Cardiac septum (tissue), 1 donor: ENCODE measurements at regions of chr1 and their contacts with region 1.

Region 1: DNA sequence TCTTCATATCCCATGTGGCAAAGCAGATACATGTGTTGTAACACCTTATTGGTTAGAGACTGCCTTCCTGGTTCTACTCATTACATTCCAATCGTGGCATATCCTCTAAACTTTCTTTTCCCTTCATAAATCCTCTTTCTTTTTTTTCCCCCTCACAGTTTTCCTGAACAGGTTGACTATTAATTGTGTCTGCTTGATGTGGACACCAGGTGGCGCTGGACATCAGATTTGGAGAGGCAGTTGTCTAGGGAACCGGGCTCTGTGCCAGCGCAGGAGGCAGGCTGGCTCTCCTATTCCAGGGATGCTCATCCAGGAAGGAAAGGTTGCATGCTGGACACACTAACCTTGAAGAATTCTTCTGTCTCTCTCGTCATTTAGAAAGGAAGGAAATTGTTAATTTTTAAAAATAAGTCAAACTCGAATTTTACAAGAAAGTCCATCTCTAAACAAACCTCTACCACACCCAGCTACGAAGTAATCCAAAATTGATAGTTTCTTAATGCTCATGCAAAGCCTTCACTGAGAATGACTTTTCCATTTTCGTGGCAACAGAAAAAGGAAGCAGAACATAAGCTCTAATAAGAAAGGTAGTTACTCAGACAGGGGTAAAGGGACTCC is 59.4 kb upstream of the ASB17 start:
- DNase-seq: peak; percentile 90

Region 2: DNA sequence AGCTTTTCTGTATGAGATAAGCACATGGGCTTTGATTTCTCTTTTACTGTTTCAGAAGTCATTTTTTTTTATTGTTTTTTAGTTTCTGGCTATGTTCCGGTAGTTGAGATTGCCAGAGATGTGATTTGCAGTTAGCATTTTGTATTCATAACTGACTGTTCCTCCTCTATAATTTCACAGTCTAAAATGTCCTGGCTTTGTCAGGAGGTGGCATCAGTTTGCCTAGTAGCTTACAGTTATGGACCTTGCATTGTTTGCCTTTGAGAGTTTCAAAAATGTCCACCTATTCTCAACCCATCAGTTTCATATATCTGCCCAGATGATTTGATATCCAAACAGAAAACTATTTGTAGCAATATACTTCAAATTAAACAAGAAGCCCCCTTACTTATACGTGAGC is 43.4 kb after region 1 on chr1:
- intact Hi-C with region 1: no loop called
- DNase-seq: no peak

Region 3: DNA sequence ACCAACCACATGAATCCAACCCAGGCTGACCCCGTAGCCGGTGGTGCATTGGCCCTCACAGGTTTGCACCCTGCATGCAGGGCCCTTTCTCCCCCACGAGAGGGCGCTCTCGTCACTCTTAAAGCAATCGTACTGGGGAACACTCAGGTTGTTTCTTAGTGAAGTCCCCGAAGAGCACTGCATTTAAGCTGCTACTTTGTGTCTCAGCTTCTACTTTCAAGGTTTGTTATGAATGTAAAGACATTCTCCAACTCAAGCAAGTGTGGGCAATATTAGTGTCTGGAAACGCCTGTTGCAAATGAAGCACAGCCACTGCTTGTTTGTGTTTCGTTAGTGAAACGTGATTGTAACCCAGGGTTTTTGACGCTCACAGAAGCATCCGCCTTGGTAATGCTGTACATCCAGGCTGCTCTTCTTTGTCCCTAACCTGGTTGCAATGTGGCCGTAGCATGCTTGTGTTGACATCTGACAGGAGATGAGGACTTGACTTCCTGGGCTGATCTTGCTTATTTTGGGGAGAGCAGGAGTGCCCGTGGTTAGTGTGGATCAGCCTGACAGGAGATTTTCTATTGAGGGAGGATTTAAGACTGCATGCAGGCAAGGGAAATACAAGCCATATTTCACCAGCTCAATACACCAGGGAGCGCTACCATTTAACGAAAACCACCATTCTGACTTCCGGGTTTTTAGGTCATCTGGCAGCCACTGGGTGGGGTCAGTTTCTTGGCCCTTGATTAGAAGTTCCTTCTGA is 162.8 kb after region 1 on chr1:
- intact Hi-C with region 1: loop called (anchors 5 kb)
- DNase-seq: peak; percentile 86

Region 4: DNA sequence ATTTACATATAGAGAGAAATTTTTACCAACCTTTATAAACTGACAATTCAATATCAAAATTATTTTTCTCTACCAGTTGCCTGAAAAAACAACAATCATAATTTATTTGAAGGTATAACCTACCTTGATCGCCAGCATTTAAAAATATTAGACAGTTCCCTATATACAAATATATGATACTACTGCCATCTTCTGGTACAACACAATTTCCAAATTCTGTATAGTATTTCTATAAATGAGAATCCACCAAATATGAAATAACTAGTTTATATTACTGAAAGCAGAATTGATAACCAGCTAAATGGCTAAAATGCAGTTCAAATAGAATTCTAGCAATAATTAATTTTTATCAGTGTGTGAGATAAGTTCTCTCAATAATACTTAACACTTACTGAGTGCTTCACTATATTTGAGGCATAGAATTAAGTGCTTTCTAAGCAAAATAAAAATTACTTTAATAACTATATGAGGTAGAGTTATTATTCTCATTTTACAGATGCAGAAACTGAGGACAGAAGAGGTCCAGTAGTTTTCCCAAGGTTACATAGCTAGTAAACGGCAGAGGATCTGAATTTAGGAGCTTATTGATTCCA is 1152.0 kb after region 1 on chr1:
- intact Hi-C with region 1: loop called (anchors 10 kb)
- DNase-seq: no peak